Activated T-helper 1 cell treated with anti-CD3 and anti-CD28 coated beads, Interleukin-12 subunit alpha, Interleukin-12 subunit beta, Interleukin-2, Interleukin-4 antibody, amounts not matched to agents 30 ng/mL and 10 ng/mL and 1 ng/mL, durations not matched to agents 14 hours and 24 hours and 36 hours (primary cell): ENCODE measurements at regions of chr3 and their contacts with region 1.

Region 1: GRCh38 chr3:112405845-112406244 is 72.9 kb downstream of the CD200 start:
- DNase-seq: no peak
- H3K4me3 Mint-ChIP-seq: no peak overlapping the region
- H3K27ac Mint-ChIP-seq: no peak overlapping the region
- H3K4me1 Mint-ChIP-seq: peaks cover 26% of the 10 kb centered on the region
- H3K27me3 Mint-ChIP-seq: no peaks in the 10 kb centered on the region

Region 2: GRCh38 chr3:111989061-111989678 is 416.7 kb before region 1 on chr3:
- intact Hi-C with region 1: loop called (anchors 1 kb)
- DNase-seq: no peak
- H3K4me3 Mint-ChIP-seq: no peak overlapping the region
- H3K27ac Mint-ChIP-seq: no peak overlapping the region
- H3K4me1 Mint-ChIP-seq: peaks cover 44% of the 10 kb centered on the region
- H3K27me3 Mint-ChIP-seq: no peaks in the 10 kb centered on the region

Region 3: GRCh38 chr3:112390783-112391641 is 14.8 kb before region 1 on chr3:
- intact Hi-C with region 1: loop called (anchors 2 kb)
- DNase-seq: peak; percentile 8
- H3K4me3 Mint-ChIP-seq: no peak overlapping the region
- H3K27ac Mint-ChIP-seq: peak overlapping the region; percentile 84
- H3K4me1 Mint-ChIP-seq: peaks cover 50% of the 10 kb centered on the region
- H3K27me3 Mint-ChIP-seq: no peaks in the 10 kb centered on the region

Region 4: DNA sequence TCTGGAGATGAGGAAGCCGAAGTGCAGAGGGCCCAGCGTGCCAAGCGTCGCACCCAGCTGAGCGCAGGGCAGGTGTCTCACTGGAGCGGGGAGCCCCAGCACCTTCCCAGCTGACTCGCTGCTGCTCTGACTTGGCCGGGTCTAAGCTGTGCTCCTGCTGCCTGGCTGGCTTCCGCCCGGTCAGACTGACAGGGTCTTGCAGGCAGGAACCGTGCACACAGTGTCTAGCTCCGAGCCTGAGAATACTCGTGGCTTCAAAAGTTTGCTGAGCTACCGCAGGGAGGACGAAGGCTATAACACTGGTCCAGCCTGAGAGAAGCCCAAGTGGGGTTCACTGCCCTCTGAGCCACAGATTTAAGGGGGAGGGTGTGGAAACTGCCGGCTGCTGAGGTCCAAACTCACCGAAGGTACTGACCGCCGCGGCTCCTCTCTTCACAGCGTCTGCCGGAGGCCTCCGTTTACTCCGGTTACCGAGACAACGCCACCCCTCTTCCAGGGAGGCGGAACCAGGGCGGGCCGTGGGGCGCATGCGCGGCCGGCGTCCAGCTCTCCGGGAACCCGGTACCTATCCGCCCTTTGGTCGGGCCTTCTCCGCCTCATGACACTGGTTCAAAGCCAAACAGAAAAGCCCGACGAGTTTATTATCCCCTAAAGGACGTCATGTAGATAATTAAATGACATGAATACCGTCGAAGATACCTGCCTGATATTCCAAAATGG is 1035.4 kb after region 1 on chr3 and contains the start of gene CFAP44:
- intact Hi-C with region 1: no loop called
- DNase-seq: peak; percentile 44
- H3K4me3 Mint-ChIP-seq: peak within 1 kb of the TSS; percentile 26
- H3K27ac Mint-ChIP-seq: peak within 1 kb of the TSS; percentile 18
- H3K4me1 Mint-ChIP-seq: no peaks in the 10 kb centered on the region
- H3K27me3 Mint-ChIP-seq: no peaks in the 10 kb centered on the region
- total RNA-seq, gene CFAP44: 2.9 and 3.2 TPM in 2 replicates